ENCODE measurements at regions of chr10 and their contacts with region 1.

Region 1: DNA sequence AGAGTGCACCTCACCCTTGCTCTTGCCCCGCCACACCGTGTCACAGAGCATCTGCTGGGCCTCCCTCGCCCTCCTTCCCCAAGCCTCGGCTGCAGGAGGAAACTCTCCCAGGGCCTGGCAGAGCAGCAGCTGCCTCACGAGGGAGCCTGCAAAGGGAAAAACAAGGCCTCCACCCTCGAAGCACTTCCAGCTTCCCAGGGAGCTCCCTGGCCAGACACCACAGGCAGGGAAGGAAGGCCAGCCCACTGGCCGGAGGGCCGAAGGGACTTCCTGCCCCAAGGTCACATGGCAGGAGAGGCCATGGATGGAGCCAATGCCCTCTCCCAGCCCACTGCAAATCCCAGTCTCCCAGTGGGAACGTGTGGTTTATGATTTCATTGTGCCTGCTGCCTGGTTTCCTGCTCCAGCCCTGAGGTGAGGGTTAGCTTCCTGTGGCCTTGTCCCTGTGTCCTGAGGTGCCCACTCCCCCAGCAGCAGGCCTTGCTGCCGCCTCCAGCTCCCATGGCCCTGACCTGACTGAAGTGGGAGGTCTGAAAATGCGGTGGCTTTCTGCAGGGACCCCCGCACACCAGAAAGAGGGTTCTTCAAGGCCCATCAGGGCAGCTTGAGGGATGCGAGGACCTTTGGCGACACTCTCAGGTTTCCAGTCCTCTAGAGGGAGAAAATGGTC is 100.5 kb upstream of the PPIF start:
- DNase-seq: peak; percentile 88 to 93
- ATAC-seq: peak; percentile 75
- H3K4me3 ChIP-seq: no peak overlapping the region
- H3K27ac ChIP-seq: peak overlapping the region; percentile 62 to 82
- H3K4me1 ChIP-seq: peaks cover 5 to 7% of the 10 kb centered on the region in 2 donors
- H3K27me3 ChIP-seq: no peaks in the 10 kb centered on the region

Region 2: GRCh38 chr10:79038841-79039201 is 207.9 kb before region 1 on chr10:
- intact Hi-C with region 1: no loop called
- DNase-seq: peak; percentile 6 to 33
- ATAC-seq: no peak
- H3K4me3 ChIP-seq: no peak overlapping the region
- H3K27ac ChIP-seq: no peak overlapping the region
- H3K4me1 ChIP-seq: no peaks in the 10 kb centered on the region
- H3K27me3 ChIP-seq: no peaks in the 10 kb centered on the region

Region 3: DNA sequence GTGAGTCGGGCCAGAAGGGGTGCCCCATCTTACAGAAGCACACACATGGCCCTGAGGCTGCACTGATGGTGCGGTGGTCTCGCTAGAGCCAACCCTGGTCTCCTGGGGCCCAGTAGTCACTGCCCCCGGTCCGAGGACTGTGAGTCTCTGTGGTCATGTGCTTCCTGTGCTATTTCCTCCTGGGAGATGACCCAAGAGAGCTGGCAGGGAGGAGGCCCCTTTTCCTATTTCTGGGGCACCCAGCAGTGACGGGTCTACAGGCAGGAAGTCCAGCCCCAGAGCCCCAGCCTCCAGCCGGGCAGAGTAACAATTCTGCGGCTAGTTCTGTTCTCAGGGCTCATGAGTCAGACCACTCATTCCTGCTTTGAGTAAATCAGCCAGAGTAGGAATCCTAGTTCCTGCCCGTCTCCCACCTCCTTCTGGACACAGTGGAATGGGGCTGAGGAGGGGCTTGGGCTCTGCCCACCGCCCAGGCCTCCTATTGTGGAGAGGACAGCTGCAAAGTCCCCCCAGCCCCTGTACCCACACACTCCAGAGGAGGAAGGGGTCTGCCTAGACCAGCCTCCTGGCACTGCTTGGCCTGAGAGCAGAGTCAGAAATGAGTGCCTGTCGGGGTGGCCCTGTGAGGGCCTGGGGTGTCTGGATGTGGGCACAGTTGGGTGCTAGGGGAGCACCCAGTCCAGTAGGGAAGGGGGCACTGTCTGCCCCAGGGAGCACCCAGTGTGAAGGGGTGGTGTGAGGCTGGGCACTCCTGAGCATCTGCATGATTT is 20.0 kb after region 1 on chr10:
- intact Hi-C with region 1: loop called in 1 of 2 experiments (anchors 1 kb)
- DNase-seq: peak; percentile 92 to 95
- ATAC-seq: peak; percentile 83
- H3K4me3 ChIP-seq: no peak overlapping the region
- H3K27ac ChIP-seq: peak overlapping the region; percentile 62 to 87
- H3K4me1 ChIP-seq: peaks cover 0 to 7% of the 10 kb centered on the region in 2 donors
- H3K27me3 ChIP-seq: no peaks in the 10 kb centered on the region

Region 4: DNA sequence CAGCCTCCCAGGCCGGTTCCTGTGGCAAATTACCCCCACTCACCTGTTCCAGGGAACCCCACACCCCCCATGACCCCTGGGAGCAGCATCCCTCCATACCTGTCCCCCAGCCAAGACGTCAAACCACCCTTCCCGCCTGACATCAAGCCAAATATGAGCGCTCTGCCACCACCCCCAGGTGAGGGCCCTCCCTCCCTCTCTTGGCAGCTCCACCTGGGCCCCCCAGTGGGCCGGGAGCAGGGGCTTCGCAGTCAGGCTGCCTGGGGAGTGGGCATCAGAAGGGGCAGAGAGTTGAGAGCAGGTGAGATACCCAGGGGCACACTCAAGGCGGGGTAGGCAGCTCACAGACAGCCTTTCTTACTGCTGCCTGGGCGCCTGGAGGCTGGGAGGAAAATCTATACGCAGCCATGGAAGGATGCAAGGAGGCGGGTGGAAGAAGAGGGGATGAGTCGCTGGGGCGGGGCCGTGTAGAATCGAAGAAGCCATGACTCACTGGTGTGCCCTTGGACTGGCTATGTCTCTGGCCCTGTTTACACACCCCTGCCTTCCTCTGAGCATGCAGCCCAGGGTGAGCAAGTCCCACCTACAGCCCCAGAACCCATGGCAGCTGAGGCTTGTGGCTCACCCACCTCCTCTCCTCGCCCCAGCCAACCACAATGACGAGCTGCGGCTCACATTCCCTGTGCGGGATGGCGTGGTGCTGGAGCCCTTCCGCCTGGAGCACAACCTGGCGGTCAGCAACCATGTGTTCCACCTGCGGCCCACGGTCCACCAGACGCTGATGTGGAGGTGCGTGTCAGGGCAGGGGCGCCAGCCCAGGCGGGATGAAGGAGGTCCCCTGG is 51.9 kb after region 1 on chr10:
- intact Hi-C with region 1: no loop called
- DNase-seq: peak; percentile 82 to 90
- ATAC-seq: no peak
- H3K4me3 ChIP-seq: no peak overlapping the region
- H3K27ac ChIP-seq: no peak overlapping the region
- H3K4me1 ChIP-seq: no peaks in the 10 kb centered on the region
- H3K27me3 ChIP-seq: no peaks in the 10 kb centered on the region